ENCODE measurements at regions of chr12 and their contacts with region 1.

Region 1: GRCh38 chr12:53079226-53080117 is at the start of gene SPRYD3:
- H3K4me3 ChIP-seq: peak within 1 kb of the TSS; percentile 55
- H3K27ac ChIP-seq: peak within 1 kb of the TSS; percentile 85
- H3K4me1 ChIP-seq: peaks cover 2% of the 10 kb centered on the region; the same call in 1 of the 2 replicates
- CTCF ChIP-seq: no peak

Region 2: DNA sequence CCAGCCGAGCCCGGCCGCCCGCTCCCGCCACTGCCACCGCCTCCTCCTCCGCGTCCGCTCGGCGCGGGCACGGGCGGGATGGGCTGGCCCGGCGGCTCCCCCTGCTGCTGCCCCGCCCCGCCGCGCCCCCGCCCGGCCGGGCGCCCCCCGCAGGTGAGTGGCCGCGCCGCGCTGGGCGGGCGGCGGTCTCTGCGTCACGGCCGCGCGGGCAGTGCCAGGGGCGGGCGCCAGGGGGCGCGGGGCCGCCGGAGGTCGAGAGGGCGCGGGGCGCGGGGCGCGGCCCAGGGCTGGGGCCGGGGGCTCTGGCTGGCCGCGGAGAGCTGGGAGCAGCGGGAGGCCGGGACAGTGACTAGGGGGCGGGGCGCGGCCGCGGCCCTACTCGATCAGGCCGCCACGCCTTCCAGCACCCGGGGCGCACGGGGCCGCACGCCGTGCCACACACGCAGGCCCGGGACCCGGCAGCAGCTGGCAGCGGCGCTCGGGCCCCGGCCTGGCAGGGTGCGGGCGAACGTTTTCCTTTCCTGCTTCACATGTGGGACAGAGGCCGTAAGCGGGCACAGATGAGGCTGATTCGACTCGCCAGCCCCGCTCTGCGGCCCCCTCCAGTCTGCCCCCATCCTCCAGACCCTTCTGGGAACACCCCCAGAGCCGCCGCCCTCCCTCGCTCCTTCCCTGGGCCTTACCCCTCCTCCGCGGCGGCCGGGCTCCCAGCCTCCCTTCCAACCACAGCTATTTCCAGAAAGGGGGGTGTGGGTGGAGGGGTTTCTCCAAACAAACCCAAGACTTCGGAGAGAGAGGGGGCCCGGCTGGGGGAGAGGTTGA is 32.0 kb before region 1 on chr12:
- CTCF ChIA-PET with region 1: no interaction called
- POLR2A ChIA-PET with region 1: interaction called, 11 read pairs
- H3K4me3 ChIP-seq: peak overlapping the region; percentile 65
- H3K27ac ChIP-seq: peak overlapping the region; percentile 84; the same call in 1 of the 2 replicates
- H3K4me1 ChIP-seq: peaks cover 32% of the 10 kb centered on the region
- CTCF ChIP-seq: no peak

Region 3: GRCh38 chr12:53098982-53099651 is 19.6 kb after region 1 on chr12:
- CTCF ChIA-PET with region 1: interaction called, 28 read pairs
- POLR2A ChIA-PET with region 1: interaction called, 18 read pairs
- H3K4me3 ChIP-seq: no peak overlapping the region
- H3K27ac ChIP-seq: no peak overlapping the region
- H3K4me1 ChIP-seq: peaks cover 3% of the 10 kb centered on the region; the same call in 1 of the 2 replicates
- CTCF ChIP-seq: peak; percentile 87

Region 4: GRCh38 chr12:53123578-53124351 is 44.3 kb after region 1 on chr12:
- CTCF ChIA-PET with region 1: no interaction called
- POLR2A ChIA-PET with region 1: no interaction called
- H3K4me3 ChIP-seq: no peak overlapping the region
- H3K27ac ChIP-seq: no peak overlapping the region
- H3K4me1 ChIP-seq: no peaks in the 10 kb centered on the region
- CTCF ChIP-seq: no peak

Region 5: GRCh38 chr12:53169644-53170043 is 90.2 kb after region 1 on chr12:
- CTCF ChIA-PET with region 1: no interaction called
- POLR2A ChIA-PET with region 1: no interaction called
- H3K4me3 ChIP-seq: no peak overlapping the region
- H3K27ac ChIP-seq: no peak overlapping the region
- H3K4me1 ChIP-seq: peaks cover 12% of the 10 kb centered on the region
- CTCF ChIP-seq: no peak

Region 6: DNA sequence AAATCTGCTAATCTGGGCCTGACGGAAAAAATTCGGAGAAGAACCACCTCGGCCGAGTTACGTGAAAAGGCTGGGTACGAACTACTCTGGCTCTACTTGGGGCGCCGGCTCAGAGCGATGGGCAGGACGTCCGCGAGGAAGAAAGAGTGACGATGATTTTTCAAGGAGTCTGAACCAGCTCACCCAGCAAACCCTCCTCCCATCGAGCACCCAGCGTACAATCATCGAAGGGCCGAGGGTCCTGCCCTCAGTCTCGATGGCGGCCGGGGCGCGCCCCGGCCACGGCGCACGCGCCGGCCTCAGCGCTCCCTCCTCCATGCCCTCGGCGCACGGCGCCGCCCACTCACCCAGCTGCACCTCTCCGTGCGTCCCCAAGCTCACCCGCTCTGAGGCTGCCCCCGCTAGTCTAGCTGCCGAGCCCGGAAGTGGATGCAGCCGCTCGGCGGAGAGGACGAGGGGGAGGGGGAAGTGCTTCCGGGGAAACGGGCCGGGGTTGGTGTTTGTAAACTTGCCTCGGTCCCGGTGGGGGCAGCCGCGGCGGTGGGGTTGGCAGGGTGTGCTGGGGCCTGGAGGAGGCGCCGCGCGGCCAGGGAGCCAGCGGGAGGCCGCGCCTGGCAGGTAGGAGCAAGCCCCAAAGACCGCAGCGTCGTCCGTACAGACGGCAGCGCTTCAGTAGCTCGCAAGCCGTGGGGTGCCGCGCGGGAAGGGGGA is 100.9 kb after region 1 on chr12 and contains the starts of genes CSAD and ZNF740:
- CTCF ChIA-PET with region 1: interaction called, 3 read pairs
- POLR2A ChIA-PET with region 1: interaction called, 14 read pairs
- H3K4me3 ChIP-seq: peak within 1 kb of the TSS; percentile 80
- H3K27ac ChIP-seq: peak within 1 kb of the TSS; percentile 80
- H3K4me1 ChIP-seq: peaks cover 16% of the 10 kb centered on the region; the same call in 1 of the 2 replicates
- CTCF ChIP-seq: peak; percentile 79

Measured in HEK293 (cell line).